GM10248 (cell line): ENCODE measurements at regions of chr20 and their contacts with region 1.

Region 1: GRCh38 chr20:17584689-17585088 is 14.8 kb downstream of the DSTN start:
- DNase-seq: no peak
- CTCF ChIP-seq: no peak

Region 2: GRCh38 chr20:17569616-17570346 is 14.9 kb before region 1 on chr20 and contains the start of gene DSTN:
- CTCF ChIA-PET with region 1: interaction called, 14 read pairs
- POLR2A ChIA-PET with region 1: no interaction called
- DNase-seq: peak; percentile 95
- CTCF ChIP-seq: no peak